GM12878 (cell line): ENCODE measurements at regions of chr4 and their contacts with region 1.

Region 1: GRCh38 chr4:47531241-47531953 is 46.3 kb downstream of the ATP10D start:
- DNase-seq: peak; percentile 86
- ATAC-seq: peak; percentile 95
- H3K4me3 ChIP-seq: no peak overlapping the region
- H3K27ac ChIP-seq: peak overlapping the region; percentile 43
- H3K4me1 ChIP-seq: peaks cover 13% of the 10 kb centered on the region
- H3K27me3 ChIP-seq: no peaks in the 10 kb centered on the region
- CTCF ChIP-seq: no peak
- EP300 ChIP-seq: peak; percentile 51 to 54; a peak in 2 of 4 replicates
- POLR2A ChIP-seq: no peak
- RAD21 ChIP-seq: no peak

Region 2: DNA sequence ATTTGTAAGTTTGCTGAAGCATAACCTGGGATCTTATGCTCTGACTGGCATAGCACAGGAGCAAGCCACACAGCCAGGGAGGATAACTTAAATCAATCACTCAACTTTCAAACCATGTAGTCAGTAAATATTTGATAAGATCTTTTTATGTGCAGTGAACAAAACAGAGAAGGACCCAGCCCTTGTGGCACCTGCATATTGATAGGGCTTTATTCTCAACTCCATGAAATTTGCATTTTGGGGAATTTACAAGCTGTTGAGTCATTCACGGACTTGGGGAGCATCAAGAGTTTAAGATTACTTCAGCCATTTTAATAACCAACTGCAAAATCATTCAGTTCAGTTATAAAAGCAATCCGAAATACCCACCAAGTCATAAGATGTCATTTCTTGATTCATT is 190.5 kb before region 1 on chr4:
- CTCF ChIA-PET with region 1: no interaction called
- POLR2A ChIA-PET with region 1: no interaction called
- RAD21 ChIA-PET with region 1: no interaction called
- SMC1A ChIA-PET with region 1: no interaction called
- in situ Hi-C with region 1: no loop called
- intact Hi-C with region 1: no loop called
- DNase-seq: no peak
- ATAC-seq: no peak; the same call in 2 of the 3 replicates
- H3K4me3 ChIP-seq: no peak overlapping the region
- H3K27ac ChIP-seq: no peak overlapping the region
- H3K4me1 ChIP-seq: no peaks in the 10 kb centered on the region
- H3K27me3 ChIP-seq: no peaks in the 10 kb centered on the region; a peak in 1 of 4 replicates
- CTCF ChIP-seq: no peak
- EP300 ChIP-seq: no peak
- POLR2A ChIP-seq: no peak
- RAD21 ChIP-seq: no peak

Region 3: DNA sequence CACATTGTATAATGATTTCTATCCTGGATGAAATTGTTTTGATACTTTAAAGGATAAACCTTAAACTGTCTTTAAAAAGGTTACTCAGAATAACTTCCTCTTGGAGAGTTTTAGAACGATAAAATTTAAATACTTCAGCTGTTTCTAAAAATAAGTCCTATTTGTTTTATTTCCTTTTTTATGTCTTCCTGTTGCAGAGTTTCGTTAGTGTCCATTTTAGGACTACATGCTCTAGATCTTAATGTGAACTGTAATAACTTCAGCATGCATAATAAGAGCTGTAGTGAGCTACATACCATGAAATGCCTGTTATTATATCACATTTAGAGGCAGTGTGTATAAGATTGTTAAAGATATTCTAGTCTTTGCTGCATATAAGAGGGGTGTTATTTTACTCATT is 31.7 kb before region 1 on chr4:
- CTCF ChIA-PET with region 1: interaction called, 18 read pairs
- POLR2A ChIA-PET with region 1: interaction called, 6 read pairs
- RAD21 ChIA-PET with region 1: interaction called, 25 read pairs
- SMC1A ChIA-PET with region 1: interaction called, 26 read pairs
- in situ Hi-C with region 1: no loop called
- intact Hi-C with region 1: no loop called
- DNase-seq: no peak
- ATAC-seq: peak; percentile 61
- H3K4me3 ChIP-seq: peak overlapping the region; percentile 26; the same call in 1 of the 2 replicates
- H3K27ac ChIP-seq: peak overlapping the region; percentile 80
- H3K4me1 ChIP-seq: peaks cover 25% of the 10 kb centered on the region
- H3K27me3 ChIP-seq: no peaks in the 10 kb centered on the region
- CTCF ChIP-seq: no peak
- EP300 ChIP-seq: no peak
- POLR2A ChIP-seq: no peak
- RAD21 ChIP-seq: no peak